ENCODE measurements at regions of chr4 and their contacts with region 1.

Region 1: GRCh38 chr4:48141048-48141447 is 7.0 kb upstream of the TXK start:
- DNase-seq: no peak
- ATAC-seq: peak in 2 of 8 donors; percentile 42 to 56
- H3K4me3 ChIP-seq: no peak overlapping the region
- H3K27ac ChIP-seq: no peak overlapping the region
- H3K4me1 ChIP-seq: peaks cover 0 to 4% (median 0%) of the 10 kb centered on the region in 9 donors
- H3K27me3 ChIP-seq: no peaks in the 10 kb centered on the region
- CTCF ChIP-seq: peak; percentile 25 to 68 (median 60)

Region 2: DNA sequence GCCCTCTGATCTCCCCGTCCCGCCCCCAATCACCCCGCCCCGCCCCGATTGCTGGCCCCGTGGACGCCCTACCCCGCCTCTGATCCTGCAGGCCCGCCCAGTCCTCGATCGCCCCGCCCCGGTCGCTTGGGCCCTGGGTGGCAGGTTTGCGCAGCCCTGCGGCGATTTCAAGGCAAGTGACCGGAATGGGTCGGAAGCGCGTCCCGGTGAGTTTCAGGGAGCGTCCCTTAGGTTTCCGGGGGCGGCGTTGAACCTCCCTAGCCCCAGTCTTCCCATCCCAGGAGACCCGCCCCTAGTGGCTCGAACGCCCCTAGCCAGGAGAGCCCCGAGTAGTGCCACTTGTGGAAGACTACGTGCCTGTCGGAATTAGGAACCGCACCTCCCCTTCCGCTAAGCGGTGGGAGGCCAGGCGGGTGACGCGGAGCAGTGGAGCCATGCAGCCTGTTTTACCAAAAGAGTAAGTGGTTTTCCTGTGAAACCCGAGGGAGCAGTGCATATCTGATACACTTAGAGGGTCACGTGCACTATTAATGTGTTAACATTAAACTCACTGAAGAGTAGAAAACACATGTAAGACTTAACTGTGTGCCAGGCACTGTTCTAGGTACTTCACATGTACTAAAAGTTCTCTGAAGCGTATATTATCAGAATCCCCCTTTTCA is 128.9 kb after region 1 on chr4:
- intact Hi-C with region 1: loop called in 3 of 10 experiments (anchors 10 kb)
- DNase-seq: peak; percentile 91 to 93
- ATAC-seq: peak; percentile 98 to 99 (median 99)
- H3K4me3 ChIP-seq: peak overlapping the region; percentile 71 to 92 (median 88)
- H3K27ac ChIP-seq: peak overlapping the region in 9 of 10 donors; percentile 71 to 93 (median 80)
- H3K4me1 ChIP-seq: peaks cover 0 to 35% (median 8%) of the 10 kb centered on the region in 9 donors
- H3K27me3 ChIP-seq: no peaks in the 10 kb centered on the region
- CTCF ChIP-seq: peak in 5 of 9 donors; percentile 15 to 42 (median 34)

Measured in heart right ventricle (tissue), 16 donors.